CD4-positive, alpha-beta memory T cell (primary cell): ENCODE measurements at regions of chr16 and their contacts with region 1.

Region 1: GRCh38 chr16:78002915-78003538 is 19.3 kb upstream of the CLEC3A start:
- DNase-seq: peak; percentile 47 to 59 (median 51)
- H3K4me3 ChIP-seq: no peak overlapping the region
- H3K4me3 Mint-ChIP-seq: no peak overlapping the region
- H3K27ac ChIP-seq: no peak overlapping the region
- H3K27ac Mint-ChIP-seq: peak overlapping the region in 1 of 7 donors; percentile 62
- H3K4me1 ChIP-seq: no peaks in the 10 kb centered on the region
- H3K4me1 Mint-ChIP-seq: peaks cover 0 to 5% (median 1%) of the 10 kb centered on the region in 4 donors
- H3K27me3 ChIP-seq: no peaks in the 10 kb centered on the region
- H3K27me3 Mint-ChIP-seq: peaks cover 5 to 8% of the 10 kb centered on the region in 2 donors

Region 2: DNA sequence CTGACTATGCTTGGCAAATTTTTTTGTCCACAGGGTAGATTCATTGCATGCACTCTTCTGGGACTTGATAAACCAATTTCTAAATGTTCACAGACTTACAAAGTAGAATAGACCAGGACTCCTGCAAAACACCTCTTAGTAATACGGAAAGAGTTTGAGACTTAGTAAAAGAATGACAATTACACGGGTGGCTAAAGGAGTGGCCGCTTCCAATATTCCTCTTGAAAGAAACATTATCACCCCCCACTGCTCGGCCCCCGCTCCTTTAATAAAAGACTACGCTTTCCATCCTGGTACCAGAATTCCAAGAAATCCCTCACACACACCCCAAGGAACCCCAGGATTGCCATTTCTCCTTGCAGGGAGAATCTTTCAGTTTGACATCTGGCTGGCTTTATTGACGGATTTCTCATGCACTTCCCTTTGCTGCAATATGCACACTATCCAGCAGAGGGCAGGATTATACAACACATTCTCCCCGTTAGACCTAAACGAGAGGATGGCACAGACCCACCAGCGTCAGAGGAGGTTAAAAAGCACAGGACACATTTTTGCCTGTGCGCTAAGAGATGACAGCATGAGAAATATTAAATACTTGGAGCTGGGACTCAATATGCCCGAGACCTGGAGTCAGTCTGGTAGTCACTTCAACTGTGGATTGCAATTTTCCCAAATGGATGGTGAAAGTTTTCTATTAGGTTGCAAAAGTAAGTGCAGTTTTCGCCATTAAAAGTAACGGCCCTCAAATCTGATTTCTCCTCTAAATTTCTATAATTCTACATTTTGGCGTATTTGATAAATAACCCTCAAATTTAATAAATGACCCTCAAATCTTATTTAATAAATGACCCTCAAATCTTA is 327.3 kb before region 1 on chr16:
- CTCF ChIA-PET with region 1: interaction called, 34 read pairs
- POLR2A ChIA-PET with region 1: no interaction called
- intact Hi-C with region 1: loop called (anchors 1 kb)
- DNase-seq: peak; percentile 48 to 62 (median 60)
- H3K4me3 ChIP-seq: no peak overlapping the region
- H3K4me3 Mint-ChIP-seq: no peak overlapping the region
- H3K27ac ChIP-seq: no peak overlapping the region
- H3K27ac Mint-ChIP-seq: no peak overlapping the region
- H3K4me1 ChIP-seq: no peaks in the 10 kb centered on the region
- H3K4me1 Mint-ChIP-seq: no peaks in the 10 kb centered on the region
- H3K27me3 ChIP-seq: no peaks in the 10 kb centered on the region
- H3K27me3 Mint-ChIP-seq: peaks cover 2 to 5% of the 10 kb centered on the region in 2 donors

Region 3: GRCh38 chr16:77722309-77723107 is 280.5 kb before region 1 on chr16 and contains the start of gene NUDT7:
- CTCF ChIA-PET with region 1: no interaction called
- POLR2A ChIA-PET with region 1: no interaction called
- intact Hi-C with region 1: no loop called
- DNase-seq: peak; percentile 87 to 91 (median 89)
- H3K4me3 ChIP-seq: peak within 1 kb of the TSS; percentile 55 to 77
- H3K4me3 Mint-ChIP-seq: peak within 1 kb of the TSS; percentile 86 to 94 (median 90)
- H3K27ac ChIP-seq: peak within 1 kb of the TSS; percentile 54
- H3K27ac Mint-ChIP-seq: peak within 1 kb of the TSS; percentile 51 to 94 (median 87)
- H3K4me1 ChIP-seq: peaks cover 12% of the 10 kb centered on the region
- H3K4me1 Mint-ChIP-seq: peaks cover 9 to 17% (median 12%) of the 10 kb centered on the region in 4 donors
- H3K27me3 ChIP-seq: no peaks in the 10 kb centered on the region
- H3K27me3 Mint-ChIP-seq: peaks cover 0 to 2% of the 10 kb centered on the region in 2 donors
- total RNA-seq, gene NUDT7: 9.8 to 11.0 TPM

Region 4: DNA sequence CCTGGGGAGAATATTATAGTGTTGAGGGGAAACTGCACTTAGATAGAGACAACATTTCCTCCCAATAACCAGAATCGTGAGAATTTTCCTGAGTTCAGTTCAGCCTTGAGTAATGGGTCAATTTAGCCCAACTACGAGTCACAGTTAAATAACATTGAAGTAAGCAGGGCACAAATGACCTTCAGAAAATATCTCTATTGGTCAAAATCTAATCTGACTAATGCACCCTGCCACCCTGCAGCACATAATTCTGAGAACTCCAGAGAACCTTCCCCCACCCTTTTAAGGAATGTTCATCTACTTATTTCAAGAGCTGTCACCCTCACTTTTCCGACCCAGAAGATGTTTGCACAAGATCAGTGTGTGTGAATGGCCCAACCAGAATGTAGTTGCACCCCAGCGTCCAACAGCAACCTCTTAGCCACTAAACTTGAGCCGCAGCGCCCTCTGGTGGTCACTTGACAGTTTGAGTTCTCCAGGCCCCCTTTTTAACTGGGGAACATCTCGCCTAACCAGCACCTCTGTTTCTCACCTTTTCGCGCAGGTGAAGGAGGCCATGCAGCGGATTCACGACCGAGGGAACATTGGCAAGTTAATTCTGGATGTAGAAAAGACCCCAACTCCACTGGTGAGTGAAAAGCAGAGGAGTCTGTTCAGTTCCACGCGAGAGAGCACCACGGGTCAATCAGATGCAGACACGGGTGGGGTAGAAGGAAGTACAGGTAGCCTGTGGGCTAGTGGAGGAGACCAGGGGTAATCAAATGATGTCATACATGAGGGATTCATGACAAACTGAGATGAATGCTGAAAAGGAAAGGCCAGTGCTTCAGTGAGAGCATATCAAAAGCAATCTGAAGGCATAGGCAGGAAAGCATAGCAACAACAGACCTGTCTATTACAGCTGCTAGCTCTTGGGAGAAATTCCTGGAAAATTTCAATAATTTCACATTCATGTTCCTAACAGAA is 31.4 kb before region 1 on chr16:
- CTCF ChIA-PET with region 1: interaction called, 6 read pairs
- POLR2A ChIA-PET with region 1: no interaction called
- intact Hi-C with region 1: loop called (anchors 1 kb)
- DNase-seq: peak; percentile 47 to 59 (median 50)
- H3K4me3 ChIP-seq: no peak overlapping the region
- H3K4me3 Mint-ChIP-seq: no peak overlapping the region
- H3K27ac ChIP-seq: no peak overlapping the region
- H3K27ac Mint-ChIP-seq: no peak overlapping the region
- H3K4me1 ChIP-seq: no peaks in the 10 kb centered on the region
- H3K4me1 Mint-ChIP-seq: peaks cover 0 to 2% (median 0%) of the 10 kb centered on the region in 4 donors
- H3K27me3 ChIP-seq: no peaks in the 10 kb centered on the region
- H3K27me3 Mint-ChIP-seq: peaks cover 12 to 16% of the 10 kb centered on the region in 2 donors

Region 5: DNA sequence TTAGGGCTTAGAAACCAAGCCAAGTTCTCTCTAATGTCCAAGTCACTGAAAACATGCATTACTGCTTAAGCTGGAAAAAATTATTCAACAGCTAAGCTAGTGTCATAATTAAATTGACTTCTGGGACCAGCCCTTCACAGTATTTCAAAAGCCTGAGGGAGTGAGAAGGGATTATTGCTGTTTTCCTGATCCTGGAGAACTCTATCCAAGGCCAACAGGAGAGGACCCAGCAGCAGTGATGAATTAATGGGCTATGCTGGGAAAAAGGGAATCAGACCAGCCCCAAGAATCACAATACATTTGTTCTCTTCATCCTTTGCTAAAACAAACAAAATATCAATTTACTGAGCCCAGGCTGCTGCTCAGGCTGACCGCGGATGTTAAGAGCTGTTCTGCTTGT is 15.2 kb before region 1 on chr16:
- CTCF ChIA-PET with region 1: interaction called, 27 read pairs
- POLR2A ChIA-PET with region 1: no interaction called
- intact Hi-C with region 1: no loop called
- DNase-seq: no peak
- H3K4me3 ChIP-seq: no peak overlapping the region
- H3K4me3 Mint-ChIP-seq: no peak overlapping the region
- H3K27ac ChIP-seq: no peak overlapping the region
- H3K27ac Mint-ChIP-seq: no peak overlapping the region
- H3K4me1 ChIP-seq: no peaks in the 10 kb centered on the region
- H3K4me1 Mint-ChIP-seq: no peaks in the 10 kb centered on the region
- H3K27me3 ChIP-seq: no peaks in the 10 kb centered on the region
- H3K27me3 Mint-ChIP-seq: peaks cover 6 to 10% of the 10 kb centered on the region in 2 donors

Region 6: GRCh38 chr16:78025631-78026030 is 22.6 kb after region 1 on chr16:
- CTCF ChIA-PET with region 1: interaction called, 19 read pairs
- POLR2A ChIA-PET with region 1: no interaction called
- intact Hi-C with region 1: no loop called
- DNase-seq: no peak
- H3K4me3 ChIP-seq: no peak overlapping the region
- H3K4me3 Mint-ChIP-seq: no peak overlapping the region
- H3K27ac ChIP-seq: no peak overlapping the region
- H3K27ac Mint-ChIP-seq: no peak overlapping the region
- H3K4me1 ChIP-seq: no peaks in the 10 kb centered on the region
- H3K4me1 Mint-ChIP-seq: no peaks in the 10 kb centered on the region
- H3K27me3 ChIP-seq: no peaks in the 10 kb centered on the region
- H3K27me3 Mint-ChIP-seq: peaks cover 3 to 5% of the 10 kb centered on the region in 2 donors